Activated naive CD8-positive, alpha-beta T cell treated with anti-CD3 and anti-CD28 coated beads, Interleukin-2, amount 10 ng/mL, durations not matched to agents 7 days and 5 days (primary cell): ENCODE measurements at regions of chr16 and their contacts with region 1.

Region 1: DNA sequence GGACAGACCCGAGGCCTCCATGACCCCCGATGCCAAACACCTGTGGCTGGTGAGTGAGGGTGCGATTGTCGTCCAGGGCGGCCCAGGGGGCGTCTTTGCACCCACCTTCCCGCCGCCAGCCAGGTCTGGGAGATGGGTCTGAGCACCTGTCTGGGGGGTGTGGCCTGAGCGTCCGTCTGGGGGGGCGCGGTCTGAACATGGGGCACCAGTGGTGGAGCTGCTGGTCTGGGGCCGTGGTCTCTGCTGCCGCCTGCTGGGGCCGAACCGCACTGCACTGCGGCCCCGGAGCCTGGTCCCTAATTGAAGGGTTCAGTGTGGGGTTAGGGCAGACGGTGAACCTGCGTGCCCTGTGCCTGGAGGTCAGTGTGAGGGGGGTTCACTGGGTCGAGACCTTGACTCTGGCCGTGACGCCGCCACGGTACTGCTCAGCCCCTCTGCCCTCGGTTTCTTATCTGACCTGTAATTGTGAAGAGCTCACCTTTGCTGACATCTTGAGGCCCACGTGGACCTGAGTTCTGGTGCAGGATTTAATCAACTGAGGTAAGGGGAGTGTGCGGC is 12.6 kb upstream of the TCF25 start:
- DNase-seq: peak; percentile 90
- ATAC-seq: peak; percentile 75
- H3K4me3 Mint-ChIP-seq: no peak overlapping the region
- H3K27ac Mint-ChIP-seq: peak overlapping the region; percentile 2
- H3K4me1 Mint-ChIP-seq: peaks cover 29% of the 10 kb centered on the region
- H3K27me3 Mint-ChIP-seq: no peaks in the 10 kb centered on the region

Region 2: DNA sequence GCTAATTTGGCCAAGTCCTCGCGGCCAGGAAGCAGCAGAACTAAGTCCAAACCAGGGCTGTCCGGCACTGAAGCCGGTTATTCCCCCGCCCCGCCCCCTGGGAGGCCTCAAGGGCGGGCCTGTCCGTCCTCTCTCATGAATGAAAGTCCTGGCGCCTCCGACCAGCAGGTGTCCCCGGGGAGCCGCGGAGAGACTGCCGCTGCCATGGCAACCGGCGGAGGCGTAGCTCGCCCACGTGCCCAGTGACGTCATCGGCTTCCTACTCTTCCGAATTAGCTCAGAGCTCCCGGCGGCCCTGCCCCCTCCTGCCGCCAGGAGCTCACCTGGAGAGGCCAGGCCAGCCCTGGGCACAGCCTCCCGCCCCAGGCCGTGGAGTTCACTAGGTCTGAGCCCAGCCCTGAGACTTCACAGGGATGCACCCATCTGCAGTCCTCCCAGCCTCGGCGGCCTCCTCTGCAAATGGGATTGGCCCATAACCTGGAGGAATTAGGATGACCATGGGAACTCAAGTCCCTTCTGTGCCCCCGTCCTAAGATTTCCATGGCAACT is 160.7 kb before region 1 on chr16:
- POLR2A ChIA-PET with region 1: interaction called, 11 read pairs
- DNase-seq: peak; percentile 95
- ATAC-seq: peak; percentile 15
- H3K4me3 Mint-ChIP-seq: peak overlapping the region; percentile 85
- H3K27ac Mint-ChIP-seq: peak overlapping the region; percentile 48
- H3K4me1 Mint-ChIP-seq: peaks cover 14% of the 10 kb centered on the region
- H3K27me3 Mint-ChIP-seq: no peaks in the 10 kb centered on the region

Region 3: GRCh38 chr16:89706507-89707263 is 154.1 kb before region 1 on chr16:
- POLR2A ChIA-PET with region 1: interaction called, 13 read pairs
- DNase-seq: no peak
- ATAC-seq: no peak
- H3K4me3 Mint-ChIP-seq: no peak overlapping the region
- H3K27ac Mint-ChIP-seq: no peak overlapping the region
- H3K4me1 Mint-ChIP-seq: peaks cover 9% of the 10 kb centered on the region
- H3K27me3 Mint-ChIP-seq: no peaks in the 10 kb centered on the region

Region 4: DNA sequence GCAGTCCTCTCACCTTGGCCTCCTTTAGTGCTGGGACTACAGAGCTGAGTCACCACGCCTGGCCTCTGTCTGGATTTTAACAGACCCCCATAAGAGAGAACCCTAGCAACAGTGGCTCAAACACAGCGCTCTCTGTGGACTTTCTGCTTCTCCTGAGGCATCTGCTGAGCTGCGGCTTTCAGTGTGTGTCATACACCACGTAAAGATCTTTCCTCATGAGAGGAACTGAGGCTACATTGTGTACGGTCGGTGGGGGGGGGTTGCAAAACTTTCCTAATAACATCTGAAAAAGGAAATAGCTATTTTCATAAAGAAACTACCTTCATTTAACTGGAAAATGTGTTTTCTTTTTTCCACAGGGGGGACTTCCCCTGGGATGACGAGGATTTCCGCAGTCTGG is 120.6 kb after region 1 on chr16:
- POLR2A ChIA-PET with region 1: no interaction called
- DNase-seq: no peak
- ATAC-seq: no peak
- H3K4me3 Mint-ChIP-seq: no peak overlapping the region
- H3K27ac Mint-ChIP-seq: no peak overlapping the region
- H3K4me1 Mint-ChIP-seq: no peaks in the 10 kb centered on the region
- H3K27me3 Mint-ChIP-seq: no peaks in the 10 kb centered on the region